H1 (cell line): ENCODE measurements at regions of chr12 and their contacts with region 1.

Region 1: GRCh38 chr12:50111693-50112455 is at the start of gene COX14:
- DNase-seq: peak; percentile 99 to 100
- H3K4me3 ChIP-seq: peak within 1 kb of the TSS; percentile 67 to 96 (median 88)
- H3K27ac ChIP-seq: peak within 1 kb of the TSS; percentile 74
- H3K4me1 ChIP-seq: peaks cover 10 to 15% (median 12%) of the 10 kb centered on the region in 4 experiments
- H3K27me3 ChIP-seq: no peaks in the 10 kb centered on the region
- CTCF ChIP-seq: peak; percentile 81 to 93 (median 81)
- EP300 ChIP-seq: 0 out of 3 replicates have a peak, but pooled peaks of 1 of the 2 experiments have one; percentile 37
- POLR2A ChIP-seq: peak in 1 of 2 experiments; percentile 93; a peak in 2 of 3 replicates
- RAD21 ChIP-seq: peak; percentile 52 to 55
- total RNA-seq, gene COX14: 38.5 and 40.1 TPM in 2 replicates

Region 2: DNA sequence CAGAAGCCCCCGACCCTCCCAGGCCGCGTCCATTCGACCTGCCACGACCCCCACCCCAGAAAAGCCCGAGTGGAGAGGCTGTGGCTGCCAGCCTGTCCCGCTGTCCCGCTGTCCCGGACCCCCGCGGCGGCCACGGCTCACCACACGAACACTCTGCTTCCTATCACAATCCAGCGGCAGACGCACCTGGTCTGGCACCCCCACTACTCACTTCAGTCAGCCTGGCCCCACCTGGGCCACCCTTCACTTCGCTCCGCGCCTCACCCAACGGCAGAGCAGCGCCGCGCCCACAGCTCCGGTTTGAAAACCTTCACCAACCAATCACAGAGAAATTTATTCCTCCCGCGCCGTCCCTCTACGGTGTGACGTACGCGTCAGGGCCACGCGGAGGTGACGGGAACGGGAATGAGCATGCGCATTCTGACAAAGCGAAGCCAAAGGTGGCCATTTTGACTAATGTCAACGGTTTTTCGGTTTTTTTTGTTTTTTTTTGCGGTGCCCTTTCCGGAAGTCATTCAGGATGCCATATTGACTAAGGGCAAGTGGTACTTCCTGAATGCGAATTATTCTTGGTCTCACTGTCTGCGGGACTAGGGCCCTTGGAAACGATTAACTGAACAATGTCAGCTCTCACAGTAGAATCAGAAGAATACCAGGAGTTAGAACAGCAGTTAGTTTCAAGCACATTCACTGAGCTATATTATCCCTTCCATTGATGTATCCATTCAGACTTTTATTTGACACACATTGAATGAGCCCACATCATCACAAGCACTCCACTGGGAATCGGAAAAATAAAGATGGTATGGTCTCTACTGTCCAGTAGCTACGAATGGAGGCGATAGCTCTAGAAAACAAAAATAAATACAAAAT is 86.5 kb before region 1 on chr12 and contains the start of gene RACGAP1:
- CTCF ChIA-PET with region 1: no interaction called
- POLR2A ChIA-PET with region 1: no interaction called
- DNase-seq: peak; percentile 90 to 94
- H3K4me3 ChIP-seq: peak within 1 kb of the TSS; percentile 81 to 86 (median 82)
- H3K27ac ChIP-seq: no peak within 1 kb of the TSS
- H3K4me1 ChIP-seq: no peaks in the 10 kb centered on the region
- H3K27me3 ChIP-seq: no peaks in the 10 kb centered on the region
- CTCF ChIP-seq: no peak
- EP300 ChIP-seq: no peak
- POLR2A ChIP-seq: no peak; a peak in 1 of 3 replicates
- RAD21 ChIP-seq: no peak
- total RNA-seq, gene RACGAP1: 63.5 and 66.3 TPM in 2 replicates

Region 3: GRCh38 chr12:50047693-50048250 is 64.1 kb before region 1 on chr12:
- CTCF ChIA-PET with region 1: no interaction called
- POLR2A ChIA-PET with region 1: no interaction called
- DNase-seq: no peak
- H3K4me3 ChIP-seq: no peak overlapping the region
- H3K27ac ChIP-seq: no peak overlapping the region
- H3K4me1 ChIP-seq: peaks cover 4 to 8% (median 6%) of the 10 kb centered on the region in 4 experiments; a peak in 6 of 7 replicates
- H3K27me3 ChIP-seq: peaks cover 11 to 36% (median 26%) of the 10 kb centered on the region in 4 experiments
- CTCF ChIP-seq: no peak
- EP300 ChIP-seq: no peak
- POLR2A ChIP-seq: no peak
- RAD21 ChIP-seq: no peak

Region 4: DNA sequence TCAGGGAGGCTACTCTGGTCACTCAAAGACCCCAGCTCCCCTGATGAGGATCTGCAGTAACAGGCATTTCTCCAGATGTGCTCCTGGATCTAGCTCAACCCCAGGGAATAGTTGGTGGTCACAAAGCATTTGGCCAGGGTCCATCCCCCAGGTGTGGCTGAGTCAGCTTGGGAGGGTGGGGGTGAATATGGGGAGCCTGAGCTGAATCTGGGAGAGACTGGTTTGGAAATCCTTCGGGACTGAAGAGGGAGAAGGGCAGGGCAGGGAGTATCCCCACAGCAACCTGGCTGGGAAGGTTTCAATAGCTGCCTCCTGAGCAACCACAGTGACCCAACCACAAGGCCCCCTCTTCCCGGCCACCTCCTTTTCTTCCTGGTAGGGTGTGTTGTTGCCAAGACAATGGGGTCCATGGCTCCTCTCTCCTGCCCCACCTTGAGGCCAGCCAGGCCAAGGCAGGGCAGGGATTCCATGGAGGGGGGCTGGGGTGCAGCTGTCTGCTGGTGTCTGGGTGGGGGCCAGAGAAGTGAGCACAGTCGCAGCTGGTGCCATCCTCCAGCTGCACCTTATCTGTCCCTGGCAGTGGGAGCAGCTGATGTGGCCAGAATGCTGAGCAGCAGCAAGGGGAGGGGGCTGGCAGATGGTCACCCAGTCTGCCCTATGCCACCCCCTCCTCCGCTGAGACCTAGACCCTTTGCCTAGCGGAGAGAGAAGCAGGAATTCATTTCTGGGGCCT is 49.0 kb before region 1 on chr12:
- CTCF ChIA-PET with region 1: no interaction called
- POLR2A ChIA-PET with region 1: no interaction called
- DNase-seq: no peak
- H3K4me3 ChIP-seq: no peak overlapping the region
- H3K27ac ChIP-seq: no peak overlapping the region
- H3K4me1 ChIP-seq: peaks cover 0 to 5% (median 0%) of the 10 kb centered on the region in 4 experiments; a peak in 1 of 7 replicates
- H3K27me3 ChIP-seq: peaks cover 9 to 38% (median 21%) of the 10 kb centered on the region in 4 experiments
- CTCF ChIP-seq: peak in 2 of 3 experiments; percentile 17 to 20; a peak in 2 of 4 replicates
- EP300 ChIP-seq: no peak
- POLR2A ChIP-seq: no peak
- RAD21 ChIP-seq: no peak

Region 5: DNA sequence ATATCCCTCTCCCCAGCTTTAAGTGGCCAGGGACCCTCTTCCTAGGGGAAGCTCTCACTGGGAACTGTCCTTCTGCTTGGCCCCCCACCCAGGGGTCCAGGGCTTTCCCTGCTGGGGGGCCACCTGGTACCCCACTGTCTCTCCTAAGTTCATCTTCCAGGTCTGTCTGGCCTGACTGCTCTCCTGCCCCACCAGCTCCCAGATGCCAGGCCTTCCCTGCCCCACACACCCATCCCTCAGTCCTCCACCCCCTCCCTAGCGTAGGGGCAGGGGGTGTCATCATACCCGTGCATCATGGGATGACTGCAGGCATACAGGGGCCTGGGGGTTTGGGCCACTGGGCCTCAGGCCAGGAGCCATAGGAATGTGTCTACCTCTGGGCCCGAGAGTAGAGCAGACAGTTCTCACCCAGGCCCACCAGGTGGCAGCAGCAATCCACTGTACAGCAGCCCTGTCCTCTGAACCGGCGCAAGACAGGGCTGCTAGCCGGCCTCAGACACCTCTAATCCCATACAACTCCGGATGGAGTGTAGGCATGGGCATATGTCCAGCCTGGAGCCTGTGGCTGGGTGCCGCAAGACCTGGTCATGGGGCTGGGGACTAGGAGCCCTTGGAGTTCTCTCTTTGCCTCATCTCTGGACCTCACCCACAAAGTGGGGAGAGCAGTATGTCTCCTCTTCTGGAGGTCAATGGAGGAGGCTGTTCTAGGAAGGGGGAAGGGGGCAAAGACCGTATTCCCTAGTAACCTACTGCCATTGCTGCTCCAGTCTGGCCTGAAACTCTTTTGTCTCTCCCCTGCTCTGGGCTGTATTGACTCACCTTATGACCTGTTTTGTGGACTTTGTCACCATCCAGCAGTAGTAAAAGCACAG is 36.7 kb before region 1 on chr12:
- CTCF ChIA-PET with region 1: interaction called, 625 read pairs
- POLR2A ChIA-PET with region 1: interaction called, 6 read pairs
- DNase-seq: peak in 1 of 2 experiments; percentile 93
- H3K4me3 ChIP-seq: no peak overlapping the region
- H3K27ac ChIP-seq: no peak overlapping the region
- H3K4me1 ChIP-seq: peaks cover 0 to 6% (median 3%) of the 10 kb centered on the region in 4 experiments; a peak in 5 of 7 replicates
- H3K27me3 ChIP-seq: peaks cover 0 to 4% (median under 1%) of the 10 kb centered on the region in 4 experiments; a peak in 2 of 7 replicates
- CTCF ChIP-seq: peak; percentile 92 to 94 (median 94)
- EP300 ChIP-seq: no peak
- POLR2A ChIP-seq: no peak
- RAD21 ChIP-seq: peak; percentile 96 to 97

Region 6: GRCh38 chr12:50084775-50085614 is 26.9 kb before region 1 on chr12 and contains the start of gene SMARCD1:
- CTCF ChIA-PET with region 1: interaction called, 625 read pairs
- POLR2A ChIA-PET with region 1: interaction called, 457 read pairs
- DNase-seq: peak; percentile 93 to 94
- H3K4me3 ChIP-seq: peak within 1 kb of the TSS; percentile 42 to 88 (median 77)
- H3K27ac ChIP-seq: peak within 1 kb of the TSS; percentile 68; the same call in 1 of the 2 replicates
- H3K4me1 ChIP-seq: peaks cover 0 to 8% (median 5%) of the 10 kb centered on the region in 4 experiments; a peak in 3 of 7 replicates
- H3K27me3 ChIP-seq: peaks cover 0 to 15% (median 8%) of the 10 kb centered on the region in 4 experiments; a peak in 4 of 7 replicates
- CTCF ChIP-seq: peak; percentile 71 to 82 (median 74)
- EP300 ChIP-seq: no peak
- POLR2A ChIP-seq: peak; percentile 57 to 62
- RAD21 ChIP-seq: no peak
- total RNA-seq, gene SMARCD1: 128 and 140 TPM in 2 replicates

Region 7: GRCh38 chr12:50127546-50127945 is 15.7 kb after region 1 on chr12:
- CTCF ChIA-PET with region 1: interaction called, 28 read pairs
- POLR2A ChIA-PET with region 1: interaction called, 17 read pairs
- DNase-seq: no peak
- H3K4me3 ChIP-seq: no peak overlapping the region
- H3K27ac ChIP-seq: no peak overlapping the region
- H3K4me1 ChIP-seq: no peaks in the 10 kb centered on the region
- H3K27me3 ChIP-seq: no peaks in the 10 kb centered on the region
- CTCF ChIP-seq: no peak
- EP300 ChIP-seq: no peak
- POLR2A ChIP-seq: no peak
- RAD21 ChIP-seq: no peak

Region 8: DNA sequence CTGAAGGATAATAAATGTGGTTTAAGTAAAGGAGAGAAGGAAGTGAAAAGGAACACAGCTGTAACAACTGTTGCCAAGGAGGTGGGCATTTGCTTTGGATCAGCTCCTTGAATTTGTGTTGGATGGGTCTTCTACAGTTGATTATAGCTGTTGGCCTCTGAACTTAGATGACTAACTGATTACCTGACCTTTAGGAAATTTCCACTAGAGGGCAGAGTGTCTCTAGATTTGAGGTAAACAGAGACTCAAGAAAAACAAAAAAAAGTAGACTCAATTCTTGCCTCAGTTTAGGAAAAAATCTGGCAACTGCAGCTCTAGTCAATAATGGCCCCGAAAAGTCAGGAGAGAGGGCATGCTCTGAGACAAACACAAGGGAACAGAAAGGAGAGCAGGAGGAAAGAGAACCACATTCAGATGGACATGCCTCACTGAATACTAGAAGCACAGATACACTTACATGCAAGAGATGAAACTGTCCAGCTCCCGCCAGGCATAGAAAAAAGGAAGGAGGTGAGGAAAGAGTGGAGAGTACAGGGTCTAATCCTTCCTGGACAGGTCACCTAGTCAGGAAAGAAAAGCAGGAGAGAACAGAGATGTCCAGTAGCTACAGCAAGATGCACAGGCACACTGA is 20.7 kb after region 1 on chr12:
- CTCF ChIA-PET with region 1: interaction called, 28 read pairs
- POLR2A ChIA-PET with region 1: interaction called, 17 read pairs
- DNase-seq: no peak
- H3K4me3 ChIP-seq: no peak overlapping the region
- H3K27ac ChIP-seq: no peak overlapping the region
- H3K4me1 ChIP-seq: no peaks in the 10 kb centered on the region
- H3K27me3 ChIP-seq: no peaks in the 10 kb centered on the region
- CTCF ChIP-seq: peak in 2 of 3 experiments; percentile 33 to 38; a peak in 2 of 4 replicates
- EP300 ChIP-seq: no peak
- POLR2A ChIP-seq: no peak
- RAD21 ChIP-seq: peak; percentile 49 to 56; a peak in 3 of 4 replicates